HEK293T (cell line): ENCODE measurements at regions of chr5 and their contacts with region 1.

Region 1: GRCh38 chr5:115575167-115576070 is 26.9 kb downstream of the TICAM2 start:
- DNase-seq: no peak

Region 2: DNA sequence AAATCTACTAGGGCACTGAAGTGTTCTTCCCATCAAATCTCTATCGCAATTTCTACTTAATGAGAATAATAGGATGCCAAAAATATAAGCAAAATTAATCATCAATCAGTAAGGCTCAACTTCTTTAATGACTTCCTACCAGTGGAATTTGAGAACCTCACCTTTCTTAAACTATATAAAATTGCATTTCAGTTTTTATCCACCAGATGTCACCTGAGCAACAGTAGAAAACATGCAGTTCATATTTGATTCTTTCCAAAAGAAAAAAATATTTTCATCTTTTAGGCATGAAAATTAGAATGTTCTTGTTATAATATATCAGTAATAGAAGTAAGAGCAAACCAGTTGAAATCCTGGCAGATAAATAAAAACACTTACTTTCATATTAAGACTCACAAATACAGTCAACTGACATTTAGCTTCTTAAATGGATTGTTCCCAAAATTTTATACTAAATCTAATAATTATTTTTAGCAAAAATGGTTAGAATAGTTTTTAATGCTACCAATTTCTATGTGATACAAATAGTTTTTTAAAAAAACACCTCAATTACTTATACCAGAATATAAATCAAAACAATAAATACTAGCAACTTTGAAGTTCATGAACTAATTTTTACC is 265.6 kb before region 1 on chr5:
- CTCF ChIA-PET with region 1: interaction called, 66 read pairs
- POLR2A ChIA-PET with region 1: no interaction called
- DNase-seq: no peak